Activated B cell treated with CpG ODN at 0.5 μM for 24 hours (primary cell): ENCODE measurements at regions of chr4 and their contacts with region 1.

Region 1: GRCh38 chr4:37826295-37827029 is at the start of gene PGM2:
- DNase-seq: peak; percentile 91
- ATAC-seq: peak; percentile 96
- H3K4me3 Mint-ChIP-seq: peak within 1 kb of the TSS; percentile 100
- H3K27ac Mint-ChIP-seq: peak within 1 kb of the TSS; percentile 98
- H3K4me1 Mint-ChIP-seq: peaks cover 27% of the 10 kb centered on the region
- H3K27me3 Mint-ChIP-seq: no peaks in the 10 kb centered on the region
- CTCF ChIP-seq: no peak
- total RNA-seq, gene PGM2: 26.4 and 29.6 TPM in 2 replicates

Region 2: GRCh38 chr4:37802068-37802666 is 24.3 kb before region 1 on chr4:
- CTCF ChIA-PET with region 1: interaction called, 5 read pairs
- POLR2A ChIA-PET with region 1: interaction called, 3 read pairs
- intact Hi-C with region 1: loop called (anchors 1 kb)
- DNase-seq: no peak
- ATAC-seq: no peak
- H3K4me3 Mint-ChIP-seq: no peak overlapping the region
- H3K27ac Mint-ChIP-seq: no peak overlapping the region
- H3K4me1 Mint-ChIP-seq: peaks cover 4% of the 10 kb centered on the region
- H3K27me3 Mint-ChIP-seq: peaks cover 1% of the 10 kb centered on the region
- CTCF ChIP-seq: no peak

Region 3: GRCh38 chr4:37815591-37815990 is 10.9 kb before region 1 on chr4:
- CTCF ChIA-PET with region 1: no interaction called
- POLR2A ChIA-PET with region 1: no interaction called
- intact Hi-C with region 1: loop called (anchors 1 kb)
- DNase-seq: no peak
- ATAC-seq: no peak
- H3K4me3 Mint-ChIP-seq: no peak overlapping the region
- H3K27ac Mint-ChIP-seq: peak overlapping the region; percentile 75
- H3K4me1 Mint-ChIP-seq: peaks cover 12% of the 10 kb centered on the region
- H3K27me3 Mint-ChIP-seq: no peaks in the 10 kb centered on the region
- CTCF ChIP-seq: no peak

Region 4: GRCh38 chr4:37847311-37847884 is 20.9 kb after region 1 on chr4:
- CTCF ChIA-PET with region 1: interaction called, 3 read pairs
- POLR2A ChIA-PET with region 1: interaction called, 11 read pairs
- intact Hi-C with region 1: no loop called
- DNase-seq: no peak
- ATAC-seq: no peak
- H3K4me3 Mint-ChIP-seq: no peak overlapping the region
- H3K27ac Mint-ChIP-seq: no peak overlapping the region
- H3K4me1 Mint-ChIP-seq: peaks cover 10% of the 10 kb centered on the region
- H3K27me3 Mint-ChIP-seq: no peaks in the 10 kb centered on the region
- CTCF ChIP-seq: no peak